Right cardiac atrium (tissue), 5 donors: ENCODE measurements at regions of chr5 and their contacts with region 1.

Region 1: DNA sequence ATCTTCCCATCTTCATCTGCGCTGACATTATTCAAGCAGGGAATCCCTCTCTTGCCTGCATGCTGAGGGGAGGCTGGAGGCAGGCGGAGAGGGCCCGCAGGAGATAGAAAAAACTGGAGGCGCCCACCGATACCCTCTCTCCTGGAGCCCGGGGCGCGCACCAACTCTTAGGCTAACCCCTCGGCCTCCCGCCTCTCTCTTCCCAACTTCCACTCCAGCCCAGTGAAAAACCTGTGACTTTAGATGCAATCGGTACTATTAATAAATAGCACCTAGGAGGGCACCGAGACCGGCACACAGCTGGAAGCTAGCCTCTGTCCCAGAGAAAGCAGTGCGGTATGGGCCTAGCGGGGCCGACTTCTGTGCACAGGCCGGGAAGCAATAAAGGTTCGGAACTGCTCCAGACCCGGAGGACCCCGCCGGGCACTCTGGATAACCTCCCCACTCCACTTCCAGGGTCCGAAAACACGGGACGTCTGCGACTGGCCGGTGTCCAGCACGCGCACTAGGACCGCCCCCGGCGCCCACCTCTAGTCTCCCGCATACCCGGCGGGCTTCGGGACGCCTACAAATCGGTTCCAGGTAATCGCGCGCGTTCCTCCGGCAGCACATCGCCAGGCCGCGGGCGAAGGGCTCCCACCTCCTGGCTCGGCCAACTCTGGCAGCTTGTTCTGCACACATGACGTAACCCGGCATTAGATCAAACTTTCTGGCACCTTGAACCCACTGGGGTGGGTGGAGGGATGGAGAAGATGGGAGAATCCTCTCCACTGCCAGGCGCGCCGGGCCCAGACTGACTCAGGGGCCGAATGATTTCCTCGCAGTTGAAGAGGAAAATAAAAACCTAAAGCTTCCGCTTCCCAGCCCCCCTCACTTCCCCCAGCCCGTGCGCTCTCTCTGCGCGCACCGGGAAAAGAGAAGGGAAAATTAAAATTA is 1.4 kb downstream of the EFNA5 start:
- DNase-seq: peak; percentile 57 to 71 (median 71)
- ATAC-seq: peak; percentile 3 to 27
- H3K4me3 ChIP-seq: peak overlapping the region; percentile 76
- H3K27ac ChIP-seq: peak overlapping the region; percentile 77
- H3K4me1 ChIP-seq: no peaks in the 10 kb centered on the region
- H3K27me3 ChIP-seq: no peaks in the 10 kb centered on the region

Region 2: DNA sequence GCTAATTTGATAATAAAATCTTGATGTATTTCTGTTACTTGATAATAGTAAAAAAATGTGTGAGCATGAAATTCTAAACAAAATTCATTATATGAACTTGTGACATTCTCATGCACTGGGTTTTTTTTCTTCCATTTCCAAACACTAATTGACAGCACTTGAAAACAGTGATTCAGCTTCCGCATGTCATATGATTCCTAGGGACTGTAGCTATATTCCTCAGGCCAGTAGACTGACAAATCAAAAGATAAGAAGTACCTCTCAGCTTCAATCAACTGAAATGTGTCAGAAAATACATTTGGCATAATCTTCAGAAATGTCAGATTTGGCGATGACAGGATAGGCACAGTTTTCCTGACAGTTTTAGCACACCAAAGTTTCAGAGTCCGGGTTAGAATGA is 51.1 kb before region 1 on chr5:
- intact Hi-C with region 1: loop called in 2 of 4 experiments (anchors 10 kb)
- DNase-seq: no peak
- ATAC-seq: peak; percentile 40 to 68
- H3K4me3 ChIP-seq: no peak overlapping the region
- H3K27ac ChIP-seq: no peak overlapping the region
- H3K4me1 ChIP-seq: peaks cover 2% of the 10 kb centered on the region
- H3K27me3 ChIP-seq: no peaks in the 10 kb centered on the region

Region 3: GRCh38 chr5:108567429-108567828 is 898.1 kb after region 1 on chr5:
- intact Hi-C with region 1: no loop called
- DNase-seq: no peak
- ATAC-seq: no peak
- H3K4me3 ChIP-seq: no peak overlapping the region
- H3K27ac ChIP-seq: no peak overlapping the region
- H3K4me1 ChIP-seq: no peaks in the 10 kb centered on the region
- H3K27me3 ChIP-seq: no peaks in the 10 kb centered on the region